ENCODE measurements at regions of chr6 and their contacts with region 1.

Region 1: GRCh38 chr6:11585426-11586016 is 48.0 kb downstream of the TMEM170B start:
- DNase-seq: peak; percentile 18 to 59
- H3K4me3 ChIP-seq: no peak overlapping the region
- H3K27ac ChIP-seq: no peak overlapping the region
- H3K4me1 ChIP-seq: peaks cover 14% of the 10 kb centered on the region
- H3K27me3 ChIP-seq: no peaks in the 10 kb centered on the region
- CTCF ChIP-seq: peak; percentile 95

Region 2: DNA sequence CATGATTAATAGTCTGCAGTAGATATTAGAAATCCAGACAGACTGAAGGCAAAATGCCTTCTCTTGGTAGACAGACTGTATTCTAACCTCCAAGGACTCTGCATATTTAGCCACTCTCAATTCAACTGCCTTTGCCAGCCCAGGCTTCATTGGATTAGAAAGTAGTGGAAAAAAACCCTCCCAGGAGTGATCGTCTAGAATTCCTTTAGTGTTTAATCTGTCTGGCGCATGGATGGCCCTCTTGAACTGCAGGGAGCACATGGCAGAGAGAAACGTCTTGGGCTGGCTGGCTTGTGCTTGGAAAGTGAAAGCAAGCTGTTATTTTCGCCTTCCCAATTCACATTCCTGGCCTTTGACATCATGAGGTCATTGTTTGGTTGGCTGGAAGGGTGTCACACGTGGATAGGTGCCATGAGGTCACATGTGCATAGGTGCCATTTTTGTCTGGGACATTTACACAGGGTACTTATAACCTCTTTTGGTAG is 322.2 kb before region 1 on chr6:
- CTCF ChIA-PET with region 1: no interaction called
- POLR2A ChIA-PET with region 1: no interaction called
- intact Hi-C with region 1: no loop called
- DNase-seq: peak; percentile 37 to 42
- H3K4me3 ChIP-seq: no peak overlapping the region
- H3K27ac ChIP-seq: no peak overlapping the region
- H3K4me1 ChIP-seq: peaks cover 18% of the 10 kb centered on the region
- H3K27me3 ChIP-seq: no peaks in the 10 kb centered on the region
- CTCF ChIP-seq: no peak

Region 3: DNA sequence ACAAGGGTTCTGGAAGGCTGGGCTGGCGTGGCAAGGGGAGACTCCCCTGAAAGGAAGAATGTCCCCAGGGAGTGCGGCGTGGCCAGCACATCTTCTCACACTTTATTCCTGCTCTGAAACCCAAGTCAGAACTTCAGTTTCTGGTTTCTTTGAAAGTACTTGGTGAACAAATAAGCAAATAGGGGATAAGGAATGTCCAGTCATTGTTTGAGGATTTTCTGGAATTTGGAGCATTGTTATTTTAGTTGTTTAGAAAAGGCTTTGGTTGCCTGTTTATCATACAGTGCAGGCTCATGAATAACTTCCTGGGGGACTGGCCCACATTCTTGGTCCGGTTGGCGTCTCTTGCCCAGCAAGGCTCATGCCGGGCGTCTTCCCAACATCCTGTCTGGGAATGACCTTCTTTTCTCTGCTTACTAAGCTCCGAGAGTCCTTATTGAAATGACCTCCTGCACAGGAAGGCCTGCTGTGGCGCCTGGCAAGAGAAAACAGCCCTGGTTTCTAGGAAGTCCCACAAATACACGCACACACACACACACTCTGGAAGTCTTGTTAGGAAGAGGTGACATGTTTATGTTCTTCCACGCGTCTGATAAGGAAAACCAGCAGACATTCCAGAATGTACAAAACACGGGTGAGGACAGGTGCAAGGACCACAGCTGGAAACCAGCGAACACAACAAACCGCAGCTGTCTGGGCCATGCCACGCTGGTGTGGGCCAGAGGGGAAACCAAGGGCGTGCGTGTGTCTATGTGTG is 24.0 kb after region 1 on chr6:
- CTCF ChIA-PET with region 1: no interaction called
- POLR2A ChIA-PET with region 1: no interaction called
- intact Hi-C with region 1: loop called (anchors 1 kb)
- DNase-seq: peak; percentile 77 to 80
- H3K4me3 ChIP-seq: no peak overlapping the region
- H3K27ac ChIP-seq: no peak overlapping the region
- H3K4me1 ChIP-seq: peaks cover 24% of the 10 kb centered on the region
- H3K27me3 ChIP-seq: no peaks in the 10 kb centered on the region
- CTCF ChIP-seq: no peak

Region 4: DNA sequence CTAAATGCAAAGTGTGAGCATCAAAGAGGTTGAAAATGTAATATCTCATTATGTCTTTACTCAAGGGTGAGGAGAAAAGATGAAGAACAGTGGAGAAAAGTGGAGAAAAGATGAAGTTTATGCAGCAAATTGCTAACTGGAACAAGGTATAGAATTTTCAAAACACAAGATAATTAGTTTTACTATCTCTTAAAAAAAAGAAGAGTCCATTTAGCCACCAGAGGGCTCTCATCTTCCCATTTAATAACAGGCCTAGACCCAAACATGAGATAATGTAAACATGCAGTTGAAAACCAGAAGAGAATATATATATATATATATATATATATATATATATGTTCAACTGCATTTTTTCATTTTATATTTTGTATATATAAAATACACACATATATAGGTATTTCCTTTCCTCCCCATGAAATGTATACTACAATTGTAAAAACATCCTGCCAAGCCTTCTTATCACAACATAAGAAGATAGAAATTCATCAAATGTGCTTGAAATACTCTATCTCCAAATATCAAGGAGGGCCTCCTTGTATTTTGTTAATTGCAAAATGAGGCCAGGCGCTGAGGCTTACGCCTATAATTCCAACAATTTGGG is 114.7 kb after region 1 on chr6:
- CTCF ChIA-PET with region 1: no interaction called
- POLR2A ChIA-PET with region 1: no interaction called
- intact Hi-C with region 1: loop called (anchors 5 kb)
- DNase-seq: peak in 1 of 2 experiments; percentile 59
- H3K4me3 ChIP-seq: no peak overlapping the region
- H3K27ac ChIP-seq: no peak overlapping the region
- H3K4me1 ChIP-seq: no peaks in the 10 kb centered on the region
- H3K27me3 ChIP-seq: no peaks in the 10 kb centered on the region
- CTCF ChIP-seq: peak; percentile 73

Region 5: GRCh38 chr6:12150812-12151432 is 565.4 kb after region 1 on chr6:
- CTCF ChIA-PET with region 1: no interaction called
- POLR2A ChIA-PET with region 1: no interaction called
- intact Hi-C with region 1: loop called (anchors 1 kb)
- DNase-seq: peak in 1 of 2 experiments; percentile 47
- H3K4me3 ChIP-seq: no peak overlapping the region
- H3K27ac ChIP-seq: no peak overlapping the region; the same call in 1 of the 2 replicates
- H3K4me1 ChIP-seq: peaks cover 30% of the 10 kb centered on the region
- H3K27me3 ChIP-seq: no peaks in the 10 kb centered on the region
- CTCF ChIP-seq: peak; percentile 81

Region 6: GRCh38 chr6:12296255-12296573 is 710.7 kb after region 1 on chr6:
- CTCF ChIA-PET with region 1: no interaction called
- POLR2A ChIA-PET with region 1: interaction called, 29 read pairs
- intact Hi-C with region 1: no loop called
- DNase-seq: peak in 1 of 2 experiments; percentile 60
- H3K4me3 ChIP-seq: no peak overlapping the region
- H3K27ac ChIP-seq: no peak overlapping the region
- H3K4me1 ChIP-seq: peaks cover 29% of the 10 kb centered on the region
- H3K27me3 ChIP-seq: no peaks in the 10 kb centered on the region
- CTCF ChIP-seq: no peak

Region 7: DNA sequence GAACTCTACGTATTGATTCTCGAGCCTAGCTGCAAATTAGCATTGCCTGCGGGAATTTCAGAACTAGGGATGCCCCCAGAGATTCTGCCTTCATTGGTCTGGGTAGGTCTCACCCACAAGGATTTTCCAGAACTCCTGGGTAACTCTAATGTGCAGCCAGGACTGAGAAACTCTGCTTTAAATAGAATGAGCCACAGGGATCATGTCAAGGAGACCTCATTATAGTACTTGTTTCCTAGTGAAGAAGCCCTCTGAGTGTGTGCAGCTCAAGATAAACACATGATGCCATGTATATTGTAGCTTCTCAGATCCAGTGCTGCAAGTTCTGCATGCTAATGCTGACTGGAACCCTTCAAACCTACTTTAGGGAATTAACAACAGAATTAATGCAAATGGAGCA is 1310.2 kb after region 1 on chr6:
- CTCF ChIA-PET with region 1: no interaction called
- POLR2A ChIA-PET with region 1: no interaction called
- intact Hi-C with region 1: loop called (anchors 2 kb)
- DNase-seq: no peak
- H3K4me3 ChIP-seq: no peak overlapping the region
- H3K27ac ChIP-seq: no peak overlapping the region
- H3K4me1 ChIP-seq: no peaks in the 10 kb centered on the region
- H3K27me3 ChIP-seq: peaks cover 46% of the 10 kb centered on the region
- CTCF ChIP-seq: no peak